Dorsolateral prefrontal cortex (tissue), 120 donors: ENCODE measurements at regions of chr4 and their contacts with region 1.

Region 1: DNA sequence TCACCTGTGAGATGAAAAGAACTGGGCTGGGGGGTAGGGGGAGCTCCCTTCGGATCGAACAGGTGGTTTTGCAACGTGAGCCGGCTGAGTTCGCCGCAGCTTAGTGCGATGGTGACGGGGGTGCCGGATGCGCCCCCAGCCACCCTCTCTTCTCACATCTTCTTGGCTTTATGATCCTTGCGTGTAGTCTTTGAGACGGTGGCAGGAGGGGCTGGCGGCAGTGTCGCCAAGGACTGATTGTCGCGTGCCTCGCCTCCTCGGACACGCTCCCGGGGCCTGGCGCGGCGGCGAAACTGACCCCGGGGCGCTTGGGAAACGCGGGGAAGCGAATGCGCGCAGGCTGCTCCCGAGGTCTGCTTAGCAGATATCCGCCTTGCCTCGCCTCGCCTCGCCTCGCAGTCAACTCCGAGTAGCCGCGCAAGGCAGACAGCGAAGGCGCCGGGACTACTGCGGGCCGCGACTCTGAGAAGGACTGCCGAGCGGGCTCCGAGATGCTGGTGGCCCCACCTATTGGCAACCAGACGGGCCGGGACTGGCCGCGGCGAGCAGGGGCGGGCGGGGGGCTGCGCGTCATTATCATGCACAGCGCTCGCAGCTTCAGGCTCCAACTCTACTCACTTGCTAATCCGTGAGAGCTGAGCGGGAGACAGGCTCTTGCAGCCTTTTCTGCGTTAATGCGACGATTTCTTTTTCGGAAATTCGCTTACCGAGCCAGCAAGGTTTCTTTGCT is 1.5 kb downstream of the GRID2 start:
- DNase-seq: peak; percentile 72 to 93 (median 84)
- H3K4me3 ChIP-seq: peak overlapping the region; percentile 53 to 90 (median 70)
- H3K27ac ChIP-seq: peak overlapping the region in 57 of 59 donors; percentile 43 to 95 (median 84)
- H3K27me3 ChIP-seq: peaks cover 0 to 14% (median 0%) of the 10 kb centered on the region in 45 donors
- CTCF ChIP-seq: peak in 14 of 56 donors; percentile 7 to 34 (median 18)

Region 2: GRCh38 chr4:92387459-92388069 is 82.3 kb after region 1 on chr4:
- intact Hi-C with region 1: loop called (anchors 2 to 10 kb)
- DNase-seq: peak in 1 of 10 donors; percentile 12
- H3K4me3 ChIP-seq: no peak overlapping the region
- H3K27ac ChIP-seq: no peak overlapping the region
- H3K27me3 ChIP-seq: no peaks in the 10 kb centered on the region
- CTCF ChIP-seq: peak; percentile 40 to 79 (median 64)

Region 3: DNA sequence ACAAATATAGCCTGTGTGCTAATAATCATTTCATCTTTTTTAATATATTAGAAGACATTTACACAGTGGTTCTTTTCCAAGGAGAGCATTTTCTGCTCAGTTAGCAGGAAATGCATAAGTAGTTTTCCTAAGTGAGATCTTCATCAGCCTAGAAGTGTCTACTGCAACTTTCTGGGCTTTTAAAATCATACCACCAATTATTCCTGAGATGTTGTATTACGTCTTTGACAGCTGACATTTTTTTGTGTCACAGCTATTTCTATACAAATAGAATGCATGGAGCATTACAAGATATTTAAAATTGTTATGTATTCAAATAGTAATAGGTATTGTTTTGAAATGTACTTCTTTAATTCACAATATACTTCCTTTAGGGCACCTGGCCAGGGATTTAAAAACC is 156.4 kb after region 1 on chr4:
- intact Hi-C with region 1: loop called in 1 of 2 experiments (anchors 5 kb)
- DNase-seq: no peak
- H3K4me3 ChIP-seq: peak overlapping the region in 19 of 59 donors; percentile 2 to 59 (median 27)
- H3K27ac ChIP-seq: peak overlapping the region in 1 of 59 donors; percentile 3
- H3K27me3 ChIP-seq: no peaks in the 10 kb centered on the region
- CTCF ChIP-seq: no peak

Region 4: GRCh38 chr4:92551616-92552015 is 246.3 kb after region 1 on chr4:
- intact Hi-C with region 1: loop called in 1 of 2 experiments (anchors 10 kb)
- DNase-seq: no peak
- H3K4me3 ChIP-seq: peak overlapping the region in 1 of 59 donors; percentile 18
- H3K27ac ChIP-seq: peak overlapping the region in 1 of 59 donors; percentile 29
- H3K27me3 ChIP-seq: no peaks in the 10 kb centered on the region
- CTCF ChIP-seq: peak in 12 of 56 donors; percentile 12 to 59 (median 34)